Activated CD4-positive, alpha-beta T cell treated with anti-CD3 and anti-CD28 coated beads, Interleukin-2, amount 10 ng/mL, durations not matched to agents 24 days and 14 days (primary cell): ENCODE measurements at regions of chr3 and their contacts with region 1.

Region 1: DNA sequence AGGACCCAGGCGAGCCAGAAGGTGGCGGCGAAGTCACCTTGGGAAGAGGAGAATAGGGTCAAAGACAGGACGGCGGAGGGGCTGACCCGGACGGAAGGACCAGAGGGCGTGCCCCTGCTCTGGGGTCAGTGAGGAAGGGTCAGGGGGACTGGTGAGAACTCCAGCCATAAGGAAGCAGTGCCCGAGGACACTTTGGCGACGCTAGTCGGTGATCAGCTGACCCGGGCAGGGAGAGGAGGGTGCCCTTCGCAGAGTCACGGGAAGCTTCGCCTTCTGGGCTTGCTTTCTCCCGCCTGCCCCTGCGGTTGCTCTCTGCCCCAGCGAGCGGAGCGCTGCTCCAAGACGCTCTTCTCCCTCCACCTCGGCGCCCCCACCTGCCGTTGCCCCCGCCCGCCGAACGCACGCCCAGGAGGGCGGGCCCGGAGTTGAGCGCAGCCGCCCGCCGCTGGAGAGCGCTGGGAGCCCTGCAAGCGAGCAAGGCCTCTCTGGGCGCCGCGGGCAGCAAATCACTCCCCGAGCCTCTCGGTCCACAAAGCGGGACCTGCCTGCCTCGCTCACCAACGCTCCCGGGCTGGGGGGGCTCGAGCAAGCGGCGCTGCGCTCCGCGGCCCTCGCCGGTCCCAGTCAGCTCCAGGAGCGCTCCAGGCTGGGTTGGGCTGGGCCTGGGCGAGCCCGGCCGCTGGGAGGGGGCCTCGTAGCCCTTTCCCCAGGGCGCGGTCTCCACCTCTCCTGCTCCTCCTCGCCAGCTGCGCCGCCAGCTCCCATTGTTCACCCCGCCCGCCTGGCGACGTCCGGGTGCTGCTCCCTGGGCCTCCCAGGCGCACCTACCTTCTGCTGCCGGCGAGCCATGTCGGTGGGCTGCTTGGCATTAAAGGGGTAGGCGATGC is 1.2 kb downstream of the CADPS start:
- DNase-seq: no peak
- H3K4me3 Mint-ChIP-seq: no peak overlapping the region
- H3K27ac Mint-ChIP-seq: no peak overlapping the region
- H3K4me1 Mint-ChIP-seq: no peaks in the 10 kb centered on the region
- H3K27me3 Mint-ChIP-seq: peaks cover 40% of the 10 kb centered on the region

Region 2: GRCh38 chr3:61894988-61895935 is 978.7 kb before region 1 on chr3:
- intact Hi-C with region 1: no loop called
- DNase-seq: peak; percentile 81
- H3K4me3 Mint-ChIP-seq: no peak overlapping the region
- H3K27ac Mint-ChIP-seq: no peak overlapping the region
- H3K4me1 Mint-ChIP-seq: peaks cover 9% of the 10 kb centered on the region
- H3K27me3 Mint-ChIP-seq: peaks cover 7% of the 10 kb centered on the region

Region 3: GRCh38 chr3:62374341-62375218 is 499.4 kb before region 1 on chr3:
- intact Hi-C with region 1: loop called (anchors 10 kb)
- DNase-seq: no peak
- H3K4me3 Mint-ChIP-seq: no peak overlapping the region
- H3K27ac Mint-ChIP-seq: no peak overlapping the region
- H3K4me1 Mint-ChIP-seq: no peaks in the 10 kb centered on the region
- H3K27me3 Mint-ChIP-seq: peaks cover 81% of the 10 kb centered on the region

Region 4: GRCh38 chr3:62574266-62574898 is 299.6 kb before region 1 on chr3:
- intact Hi-C with region 1: no loop called
- DNase-seq: no peak
- H3K4me3 Mint-ChIP-seq: no peak overlapping the region
- H3K27ac Mint-ChIP-seq: no peak overlapping the region
- H3K4me1 Mint-ChIP-seq: no peaks in the 10 kb centered on the region
- H3K27me3 Mint-ChIP-seq: no peaks in the 10 kb centered on the region